ENCODE measurements at regions of chr14 and their contacts with region 1.

Region 1: DNA sequence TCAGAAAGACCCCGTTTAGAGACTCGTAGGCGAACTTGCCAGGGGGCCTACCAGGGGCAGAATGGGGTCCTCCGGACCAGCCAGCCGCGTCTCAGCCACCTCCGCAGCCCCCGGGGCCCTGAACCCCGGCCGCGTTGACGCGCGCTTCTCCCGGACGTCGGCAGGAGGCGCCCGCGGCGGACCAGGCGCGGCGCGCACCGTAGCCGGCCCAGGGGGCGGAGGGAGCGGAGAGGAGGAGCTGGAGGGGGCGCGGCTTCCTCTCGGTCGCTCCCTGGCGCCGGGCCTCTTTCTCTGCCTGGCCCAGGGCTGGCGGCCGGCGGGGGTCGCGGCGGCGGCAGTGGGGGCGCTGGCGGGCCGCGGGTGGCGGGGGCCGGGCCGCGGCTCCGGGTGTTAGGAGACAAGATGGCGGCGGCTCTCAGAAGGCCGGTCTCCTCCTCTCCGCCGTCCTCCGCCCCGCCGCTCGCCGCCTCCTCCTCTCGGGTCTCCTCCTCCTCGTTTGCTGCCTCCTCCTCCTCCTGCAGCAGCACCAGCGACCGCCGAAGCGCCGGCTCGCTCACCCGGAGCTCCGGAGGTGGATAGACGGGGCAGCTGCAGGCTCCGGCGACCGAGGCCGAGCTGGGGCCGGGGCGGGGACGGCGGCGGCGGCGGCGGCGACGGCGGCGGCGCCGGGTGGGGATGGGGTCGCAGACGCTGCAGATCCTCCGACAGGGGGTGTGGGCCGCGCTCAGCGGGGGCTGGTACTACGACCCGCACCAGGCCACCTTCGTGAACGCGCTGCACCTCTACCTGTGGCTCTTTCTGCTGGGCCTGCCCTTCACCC is at the start of gene PCNX1:
- DNase-seq: peak; percentile 83 to 96 (median 89)
- ATAC-seq: peak; percentile 81
- H3K4me3 ChIP-seq: peak within 1 kb of the TSS; percentile 95
- H3K4me3 Mint-ChIP-seq: peak within 1 kb of the TSS; percentile 93
- H3K27ac ChIP-seq: peak within 1 kb of the TSS; percentile 76 to 85
- H3K27ac Mint-ChIP-seq: peak within 1 kb of the TSS; percentile 92
- H3K4me1 ChIP-seq: peaks cover 38% of the 10 kb centered on the region
- H3K4me1 Mint-ChIP-seq: peaks cover 70% of the 10 kb centered on the region
- H3K27me3 ChIP-seq: no peaks in the 10 kb centered on the region
- H3K27me3 Mint-ChIP-seq: no peaks in the 10 kb centered on the region
- CTCF ChIP-seq: peak; percentile 83
- total RNA-seq, gene PCNX1: 87.1 to 87.6 TPM

Region 2: GRCh38 chr14:70759398-70759797 is 148.0 kb before region 1 on chr14:
- CTCF ChIA-PET with region 1: no interaction called
- POLR2A ChIA-PET with region 1: no interaction called
- intact Hi-C with region 1: no loop called
- DNase-seq: no peak
- ATAC-seq: no peak
- H3K4me3 ChIP-seq: no peak overlapping the region
- H3K4me3 Mint-ChIP-seq: no peak overlapping the region
- H3K27ac ChIP-seq: no peak overlapping the region
- H3K27ac Mint-ChIP-seq: no peak overlapping the region
- H3K4me1 ChIP-seq: no peaks in the 10 kb centered on the region
- H3K4me1 Mint-ChIP-seq: no peaks in the 10 kb centered on the region
- H3K27me3 ChIP-seq: no peaks in the 10 kb centered on the region
- H3K27me3 Mint-ChIP-seq: no peaks in the 10 kb centered on the region
- CTCF ChIP-seq: no peak

Region 3: GRCh38 chr14:70816525-70816924 is 90.9 kb before region 1 on chr14:
- CTCF ChIA-PET with region 1: interaction called, 17 read pairs
- POLR2A ChIA-PET with region 1: interaction called, 18 read pairs
- intact Hi-C with region 1: loop called in 1 of 2 experiments (anchors 2 kb)
- DNase-seq: no peak
- ATAC-seq: no peak
- H3K4me3 ChIP-seq: no peak overlapping the region
- H3K4me3 Mint-ChIP-seq: no peak overlapping the region
- H3K27ac ChIP-seq: no peak overlapping the region
- H3K27ac Mint-ChIP-seq: no peak overlapping the region
- H3K4me1 ChIP-seq: peaks cover 5% of the 10 kb centered on the region
- H3K4me1 Mint-ChIP-seq: peaks cover 15% of the 10 kb centered on the region
- H3K27me3 ChIP-seq: peaks cover 5 to 7% of the 10 kb centered on the region in 2 experiments
- H3K27me3 Mint-ChIP-seq: peaks cover 28% of the 10 kb centered on the region
- CTCF ChIP-seq: no peak

Region 4: GRCh38 chr14:70887207-70887681 is 20.1 kb before region 1 on chr14:
- CTCF ChIA-PET with region 1: interaction called, 49 read pairs
- POLR2A ChIA-PET with region 1: interaction called, 43 read pairs
- intact Hi-C with region 1: no loop called
- DNase-seq: peak in 3 of 14 experiments; percentile 33 to 59 (median 46)
- ATAC-seq: peak; percentile 52
- H3K4me3 ChIP-seq: peak overlapping the region; percentile 2
- H3K4me3 Mint-ChIP-seq: peak overlapping the region; percentile 65
- H3K27ac ChIP-seq: peak overlapping the region in 1 of 2 donors; percentile 52
- H3K27ac Mint-ChIP-seq: peak overlapping the region; percentile 87
- H3K4me1 ChIP-seq: peaks cover 68% of the 10 kb centered on the region
- H3K4me1 Mint-ChIP-seq: peaks cover 87% of the 10 kb centered on the region
- H3K27me3 ChIP-seq: no peaks in the 10 kb centered on the region
- H3K27me3 Mint-ChIP-seq: no peaks in the 10 kb centered on the region
- CTCF ChIP-seq: no peak

Region 5: DNA sequence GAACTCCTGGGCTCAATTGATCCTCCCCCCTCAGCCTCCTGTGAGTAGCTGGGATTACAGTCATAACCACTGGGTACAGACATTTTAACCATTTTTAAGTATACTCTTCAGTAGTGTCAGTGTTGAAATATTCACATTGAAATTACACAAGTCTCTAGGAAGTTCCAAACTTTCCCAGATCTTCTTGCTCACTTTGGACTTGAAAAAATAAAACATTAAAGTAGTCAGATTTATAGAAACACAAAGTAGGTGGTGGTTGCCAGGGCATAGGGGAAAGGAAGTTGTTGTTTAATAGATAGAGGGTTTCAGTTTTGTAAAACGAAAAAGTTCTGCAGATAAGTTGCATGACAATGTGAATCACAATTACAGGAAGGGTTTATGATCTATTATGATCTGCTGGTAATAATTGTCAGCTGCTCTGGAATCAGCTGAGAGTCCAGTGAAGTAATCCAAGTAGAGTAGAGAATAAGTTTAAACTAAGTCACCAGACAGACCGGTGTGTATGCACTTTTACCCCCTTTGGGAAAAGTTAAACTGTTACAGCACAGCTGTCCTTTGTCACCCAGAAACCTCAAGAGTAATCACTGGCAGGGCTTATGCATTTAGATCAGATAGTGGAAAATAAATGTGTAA is 27.2 kb after region 1 on chr14:
- CTCF ChIA-PET with region 1: interaction called, 32 read pairs
- POLR2A ChIA-PET with region 1: interaction called, 13 read pairs
- intact Hi-C with region 1: loop called in 1 of 2 experiments (anchors 2 kb)
- DNase-seq: peak in 3 of 14 experiments; percentile 27 to 46 (median 27)
- ATAC-seq: peak; percentile 66
- H3K4me3 ChIP-seq: peak overlapping the region; percentile 26
- H3K4me3 Mint-ChIP-seq: peak overlapping the region; percentile 80
- H3K27ac ChIP-seq: peak overlapping the region; percentile 27 to 68
- H3K27ac Mint-ChIP-seq: peak overlapping the region; percentile 78
- H3K4me1 ChIP-seq: peaks cover 18% of the 10 kb centered on the region
- H3K4me1 Mint-ChIP-seq: peaks cover 90% of the 10 kb centered on the region
- H3K27me3 ChIP-seq: no peaks in the 10 kb centered on the region
- H3K27me3 Mint-ChIP-seq: no peaks in the 10 kb centered on the region
- CTCF ChIP-seq: no peak

Region 6: DNA sequence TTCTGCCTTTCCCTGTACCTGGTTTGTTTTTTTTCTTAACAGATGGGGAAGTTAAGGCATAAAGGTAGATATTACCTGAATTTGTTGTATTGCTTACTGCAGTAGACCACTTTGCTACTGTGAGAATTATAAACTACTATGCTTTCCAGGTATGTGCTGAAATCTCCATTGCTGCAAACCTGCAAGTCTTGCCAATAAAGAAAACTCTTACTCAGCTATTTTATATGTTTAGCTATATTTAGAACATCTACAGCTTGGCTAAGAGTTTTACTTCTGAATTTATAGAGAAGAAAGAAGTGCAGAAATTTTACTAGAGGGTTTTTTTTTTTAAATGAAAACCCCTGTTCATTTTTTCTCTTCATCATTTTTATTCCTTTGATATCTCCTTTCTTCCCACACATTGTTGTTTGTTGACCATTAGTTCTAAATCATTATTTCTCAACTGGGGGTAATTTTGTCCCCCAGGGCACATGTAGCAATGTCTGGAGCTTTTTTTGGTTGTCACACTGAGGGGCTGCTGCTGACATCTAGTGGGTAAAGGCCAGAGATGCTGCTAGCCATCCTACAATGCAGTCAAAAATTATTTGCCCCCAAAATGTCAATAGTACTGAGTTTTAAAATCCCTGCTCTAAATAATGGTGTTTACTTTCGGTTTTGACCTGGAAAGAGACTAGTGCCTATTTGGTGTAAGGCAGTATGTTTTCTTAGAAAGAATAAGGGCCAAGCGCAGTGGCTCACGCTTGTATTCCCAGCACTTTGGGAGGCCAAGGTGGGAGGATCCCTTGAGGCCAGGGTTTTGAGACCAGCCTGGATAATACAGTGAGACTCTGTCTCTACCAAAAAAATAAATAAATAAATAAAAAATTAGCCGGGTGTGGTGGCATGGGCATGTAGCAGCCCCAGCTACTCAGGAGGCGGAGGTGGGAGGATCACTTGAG is 48.4 kb after region 1 on chr14:
- CTCF ChIA-PET with region 1: interaction called, 147 read pairs
- POLR2A ChIA-PET with region 1: interaction called, 80 read pairs
- intact Hi-C with region 1: loop called (anchors 1 kb)
- DNase-seq: peak; percentile 24 to 79 (median 42)
- ATAC-seq: peak; percentile 84
- H3K4me3 ChIP-seq: no peak overlapping the region
- H3K4me3 Mint-ChIP-seq: no peak overlapping the region
- H3K27ac ChIP-seq: no peak overlapping the region
- H3K27ac Mint-ChIP-seq: peak overlapping the region; percentile 55
- H3K4me1 ChIP-seq: peaks cover 19% of the 10 kb centered on the region
- H3K4me1 Mint-ChIP-seq: peaks cover 44% of the 10 kb centered on the region
- H3K27me3 ChIP-seq: no peaks in the 10 kb centered on the region
- H3K27me3 Mint-ChIP-seq: no peaks in the 10 kb centered on the region
- CTCF ChIP-seq: peak; percentile 89

Region 7: GRCh38 chr14:71011479-71011878 is 104.1 kb after region 1 on chr14:
- CTCF ChIA-PET with region 1: interaction called, 9 read pairs
- POLR2A ChIA-PET with region 1: interaction called, 11 read pairs
- intact Hi-C with region 1: no loop called
- DNase-seq: peak in 4 of 14 experiments; percentile 13 to 43 (median 30)
- ATAC-seq: peak; percentile 26
- H3K4me3 ChIP-seq: no peak overlapping the region
- H3K4me3 Mint-ChIP-seq: no peak overlapping the region
- H3K27ac ChIP-seq: no peak overlapping the region
- H3K27ac Mint-ChIP-seq: peak overlapping the region; percentile 18
- H3K4me1 ChIP-seq: no peaks in the 10 kb centered on the region
- H3K4me1 Mint-ChIP-seq: peaks cover 49% of the 10 kb centered on the region
- H3K27me3 ChIP-seq: no peaks in the 10 kb centered on the region
- H3K27me3 Mint-ChIP-seq: no peaks in the 10 kb centered on the region
- CTCF ChIP-seq: peak; percentile 37

Measured in CD4-positive, alpha-beta T cell (primary cell).